ENCODE measurements at regions of chr4 and their contacts with region 1.

Region 1: GRCh38 chr4:86924811-86925210 is 10.0 kb upstream of the AFF1 start:
- DNase-seq: no peak
- ATAC-seq: no peak
- H3K4me3 Mint-ChIP-seq: no peak overlapping the region
- H3K27ac Mint-ChIP-seq: no peak overlapping the region
- H3K4me1 Mint-ChIP-seq: peaks cover 24% of the 10 kb centered on the region
- H3K27me3 Mint-ChIP-seq: no peaks in the 10 kb centered on the region

Region 2: DNA sequence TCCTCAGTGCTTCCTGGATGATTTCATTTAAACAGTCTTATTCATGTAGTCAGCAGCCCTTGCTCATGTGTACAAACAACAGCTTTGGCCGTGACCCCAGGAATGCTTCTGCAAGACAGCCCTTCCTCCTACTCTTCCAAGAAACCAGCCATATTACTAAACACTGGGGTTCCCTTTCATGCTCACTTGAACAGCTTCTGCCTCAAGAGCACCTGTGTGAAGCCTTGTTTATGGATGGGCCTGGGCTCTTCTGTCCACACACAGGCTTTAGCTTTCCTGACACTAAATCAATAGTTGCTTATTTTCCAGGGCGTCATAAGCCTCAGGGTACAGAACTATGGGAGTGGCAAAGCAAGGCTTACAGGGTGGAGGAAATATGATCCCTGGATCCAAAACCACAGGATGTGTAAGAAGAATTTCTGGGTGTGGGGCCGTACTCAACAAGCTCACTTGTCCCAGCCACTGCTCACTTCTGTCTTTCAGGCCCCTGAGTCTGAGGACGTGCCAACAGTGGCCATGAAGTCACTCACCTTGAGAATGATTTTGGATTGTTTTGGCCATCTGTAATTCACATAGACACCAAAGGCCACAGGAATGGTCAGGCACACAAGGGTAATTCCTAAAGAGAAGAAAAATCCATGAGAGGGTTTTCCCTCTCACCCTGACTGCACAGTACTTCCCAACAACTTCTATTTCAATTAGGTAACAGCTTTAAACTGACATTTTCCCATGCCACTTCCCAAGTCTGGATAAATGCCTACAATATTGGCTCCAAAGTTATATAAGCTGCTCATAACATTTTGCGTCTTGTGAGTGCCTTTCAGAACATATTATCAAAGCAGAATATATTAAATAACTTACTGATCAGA is 93.3 kb before region 1 on chr4:
- CTCF ChIA-PET with region 1: no interaction called
- POLR2A ChIA-PET with region 1: no interaction called
- intact Hi-C with region 1: no loop called
- DNase-seq: no peak
- ATAC-seq: no peak
- H3K4me3 Mint-ChIP-seq: no peak overlapping the region
- H3K27ac Mint-ChIP-seq: no peak overlapping the region
- H3K4me1 Mint-ChIP-seq: no peaks in the 10 kb centered on the region
- H3K27me3 Mint-ChIP-seq: no peaks in the 10 kb centered on the region

Region 3: GRCh38 chr4:86910820-86911684 is 13.8 kb before region 1 on chr4:
- CTCF ChIA-PET with region 1: interaction called, 15 read pairs
- POLR2A ChIA-PET with region 1: no interaction called
- intact Hi-C with region 1: no loop called
- DNase-seq: no peak
- ATAC-seq: no peak
- H3K4me3 Mint-ChIP-seq: no peak overlapping the region
- H3K27ac Mint-ChIP-seq: no peak overlapping the region
- H3K4me1 Mint-ChIP-seq: peaks cover 20% of the 10 kb centered on the region
- H3K27me3 Mint-ChIP-seq: no peaks in the 10 kb centered on the region

Region 4: GRCh38 chr4:87093443-87094123 is 168.8 kb after region 1 on chr4:
- CTCF ChIA-PET with region 1: interaction called, 91 read pairs
- POLR2A ChIA-PET with region 1: no interaction called
- intact Hi-C with region 1: loop called (anchors 1 kb)
- DNase-seq: peak; percentile 60
- ATAC-seq: peak; percentile 79
- H3K4me3 Mint-ChIP-seq: no peak overlapping the region
- H3K27ac Mint-ChIP-seq: peak overlapping the region; percentile 78
- H3K4me1 Mint-ChIP-seq: peaks cover 52% of the 10 kb centered on the region
- H3K27me3 Mint-ChIP-seq: no peaks in the 10 kb centered on the region

Region 5: GRCh38 chr4:87103691-87104187 is 178.9 kb after region 1 on chr4:
- CTCF ChIA-PET with region 1: interaction called, 10 read pairs
- POLR2A ChIA-PET with region 1: no interaction called
- intact Hi-C with region 1: no loop called
- DNase-seq: no peak
- ATAC-seq: peak; percentile 66
- H3K4me3 Mint-ChIP-seq: peak overlapping the region; percentile 7
- H3K27ac Mint-ChIP-seq: peak overlapping the region; percentile 77
- H3K4me1 Mint-ChIP-seq: peaks cover 63% of the 10 kb centered on the region
- H3K27me3 Mint-ChIP-seq: no peaks in the 10 kb centered on the region

Region 6: DNA sequence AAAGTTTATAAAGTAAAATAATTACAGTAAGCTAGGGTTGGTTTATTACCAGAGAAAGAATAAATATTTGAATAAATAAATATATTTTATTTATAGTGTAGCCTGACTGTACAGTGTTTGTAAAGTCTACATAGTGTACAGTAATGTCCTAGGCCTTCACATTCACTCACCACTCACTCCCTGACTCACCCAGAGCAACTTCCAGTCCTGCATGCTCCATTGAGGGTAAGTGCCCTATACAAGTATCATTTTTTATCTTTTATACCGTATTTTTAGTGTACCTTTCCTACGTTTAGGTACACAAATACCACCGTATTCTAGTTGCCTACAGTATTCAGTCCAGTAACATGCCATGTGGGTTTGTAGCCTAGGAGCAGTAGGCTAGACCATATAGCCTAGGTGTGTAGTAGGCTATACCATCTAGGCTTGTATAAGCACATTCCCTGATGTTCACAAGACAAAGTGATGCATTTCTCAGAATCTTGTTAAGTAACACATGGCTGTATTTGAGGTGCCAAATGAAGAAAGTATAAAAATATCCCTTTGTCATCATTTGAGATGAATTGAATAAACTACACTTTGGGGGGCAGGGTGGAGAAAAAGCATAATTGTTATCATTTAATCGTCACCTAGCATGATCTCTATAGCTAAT is 310.3 kb after region 1 on chr4:
- CTCF ChIA-PET with region 1: interaction called, 20 read pairs
- POLR2A ChIA-PET with region 1: no interaction called
- intact Hi-C with region 1: loop called (anchors 1 kb)
- DNase-seq: no peak
- ATAC-seq: no peak
- H3K4me3 Mint-ChIP-seq: peak overlapping the region; percentile 69
- H3K27ac Mint-ChIP-seq: no peak overlapping the region
- H3K4me1 Mint-ChIP-seq: peaks cover 1% of the 10 kb centered on the region
- H3K27me3 Mint-ChIP-seq: no peaks in the 10 kb centered on the region